ENCODE measurements at regions of chr7 and their contacts with region 1.

Region 1: DNA sequence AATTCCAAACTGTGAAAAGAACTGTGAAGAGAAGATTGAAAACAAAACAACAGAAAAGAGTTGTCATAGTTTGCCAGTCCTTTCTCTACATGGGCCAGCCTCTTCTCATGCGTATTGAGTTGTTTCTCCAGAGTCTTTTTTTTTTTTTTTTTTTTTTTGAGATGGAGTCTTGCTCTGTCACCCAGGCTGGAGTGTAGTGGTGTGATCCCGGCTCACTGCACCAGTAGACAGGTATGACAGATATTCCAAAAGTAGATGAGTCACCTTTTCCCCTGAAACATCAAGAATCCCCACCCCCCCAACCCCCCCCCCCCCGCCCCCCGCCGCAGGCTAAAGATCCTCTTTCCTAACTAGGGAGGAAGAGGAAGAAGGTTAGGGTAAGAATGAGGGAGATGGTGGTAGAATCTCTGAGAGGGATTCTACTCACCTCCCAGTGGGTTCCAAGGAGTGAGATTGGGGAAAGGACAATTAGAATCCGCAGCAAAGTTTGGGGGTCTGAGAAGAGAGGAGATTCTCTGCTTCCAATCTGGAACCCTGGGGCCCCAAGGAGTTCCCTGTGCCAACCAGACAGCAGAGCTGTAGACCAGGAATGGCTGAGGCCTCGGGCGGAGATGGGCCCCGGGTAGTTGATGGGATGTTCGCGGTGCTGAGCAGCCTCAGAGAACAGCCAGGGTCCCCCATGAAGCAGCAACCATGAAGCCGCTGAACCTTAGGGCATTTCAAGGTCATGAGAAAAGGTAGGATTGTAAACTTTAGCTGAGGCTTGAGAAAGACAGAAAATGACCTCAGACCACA is 15.8 kb upstream of the KMT2C start:
- DNase-seq: no peak
- ATAC-seq: no peak
- H3K4me3 ChIP-seq: no peak overlapping the region
- H3K4me3 Mint-ChIP-seq: no peak overlapping the region
- H3K27ac ChIP-seq: no peak overlapping the region
- H3K27ac Mint-ChIP-seq: no peak overlapping the region
- H3K4me1 ChIP-seq: no peaks in the 10 kb centered on the region
- H3K4me1 Mint-ChIP-seq: peaks cover 0 to 4% (median 2%) of the 10 kb centered on the region in 3 donors
- H3K27me3 ChIP-seq: peaks cover 0 to 2% of the 10 kb centered on the region in 2 experiments
- H3K27me3 Mint-ChIP-seq: no peaks in the 10 kb centered on the region

Region 2: GRCh38 chr7:152341039-152341913 is 110.3 kb before region 1 on chr7:
- CTCF ChIA-PET with region 1: no interaction called
- POLR2A ChIA-PET with region 1: no interaction called
- DNase-seq: peak in 1 of 35 experiments; percentile 17
- ATAC-seq: peak in 1 of 4 experiments; percentile 19
- H3K4me3 ChIP-seq: no peak overlapping the region
- H3K4me3 Mint-ChIP-seq: no peak overlapping the region
- H3K27ac ChIP-seq: no peak overlapping the region
- H3K27ac Mint-ChIP-seq: no peak overlapping the region
- H3K4me1 ChIP-seq: peaks cover 9 to 13% of the 10 kb centered on the region in 2 experiments
- H3K4me1 Mint-ChIP-seq: peaks cover 67 to 75% (median 68%) of the 10 kb centered on the region in 3 donors
- H3K27me3 ChIP-seq: no peaks in the 10 kb centered on the region
- H3K27me3 Mint-ChIP-seq: no peaks in the 10 kb centered on the region

Region 3: GRCh38 chr7:152383341-152384234 is 68.0 kb before region 1 on chr7:
- CTCF ChIA-PET with region 1: no interaction called
- POLR2A ChIA-PET with region 1: no interaction called
- DNase-seq: no peak
- ATAC-seq: peak in 1 of 4 experiments; percentile 15
- H3K4me3 ChIP-seq: no peak overlapping the region
- H3K4me3 Mint-ChIP-seq: no peak overlapping the region
- H3K27ac ChIP-seq: no peak overlapping the region
- H3K27ac Mint-ChIP-seq: no peak overlapping the region
- H3K4me1 ChIP-seq: peaks cover 2% of the 10 kb centered on the region in 2 experiments
- H3K4me1 Mint-ChIP-seq: peaks cover 35 to 42% (median 38%) of the 10 kb centered on the region in 3 donors
- H3K27me3 ChIP-seq: no peaks in the 10 kb centered on the region
- H3K27me3 Mint-ChIP-seq: no peaks in the 10 kb centered on the region

Region 4: DNA sequence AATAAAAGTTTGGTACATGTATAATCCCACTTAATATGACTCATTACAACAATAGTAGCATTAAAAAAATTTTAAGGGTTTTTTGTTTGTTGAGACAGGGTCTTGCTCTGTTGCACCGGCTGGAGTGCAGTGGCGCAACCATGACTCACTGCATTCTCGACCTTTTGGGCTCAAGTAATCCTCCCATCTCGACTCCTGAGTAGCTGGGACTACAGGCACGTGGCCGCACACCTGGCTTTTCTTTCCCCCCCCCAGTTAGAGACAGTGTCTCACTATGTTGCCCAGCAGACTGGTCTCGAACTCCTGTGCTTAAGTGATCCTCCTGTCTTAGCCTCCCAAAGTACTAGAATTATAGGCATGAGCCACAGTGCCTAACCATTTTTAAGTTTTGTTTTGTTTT is 56.4 kb before region 1 on chr7:
- CTCF ChIA-PET with region 1: no interaction called
- POLR2A ChIA-PET with region 1: interaction called in 1 of 2 experiments, 11 read pairs
- DNase-seq: no peak
- ATAC-seq: no peak
- H3K4me3 ChIP-seq: no peak overlapping the region
- H3K4me3 Mint-ChIP-seq: no peak overlapping the region
- H3K27ac ChIP-seq: no peak overlapping the region
- H3K27ac Mint-ChIP-seq: no peak overlapping the region
- H3K4me1 ChIP-seq: peaks cover 0 to 15% of the 10 kb centered on the region in 2 experiments
- H3K4me1 Mint-ChIP-seq: peaks cover 74 to 82% (median 80%) of the 10 kb centered on the region in 3 donors
- H3K27me3 ChIP-seq: no peaks in the 10 kb centered on the region
- H3K27me3 Mint-ChIP-seq: no peaks in the 10 kb centered on the region

Region 5: GRCh38 chr7:152463709-152464311 is 12.3 kb after region 1 on chr7:
- CTCF ChIA-PET with region 1: no interaction called
- POLR2A ChIA-PET with region 1: no interaction called
- DNase-seq: peak; percentile 100
- ATAC-seq: peak; percentile 88 to 92 (median 90)
- H3K4me3 ChIP-seq: peak overlapping the region; percentile 87 to 89
- H3K4me3 Mint-ChIP-seq: peak overlapping the region; percentile 88 to 92 (median 91)
- H3K27ac ChIP-seq: peak overlapping the region; percentile 73
- H3K27ac Mint-ChIP-seq: peak overlapping the region; percentile 39 to 91
- H3K4me1 ChIP-seq: peaks cover 6 to 11% of the 10 kb centered on the region in 2 experiments
- H3K4me1 Mint-ChIP-seq: peaks cover 11 to 17% (median 15%) of the 10 kb centered on the region in 3 donors
- H3K27me3 ChIP-seq: no peaks in the 10 kb centered on the region
- H3K27me3 Mint-ChIP-seq: no peaks in the 10 kb centered on the region

Region 6: DNA sequence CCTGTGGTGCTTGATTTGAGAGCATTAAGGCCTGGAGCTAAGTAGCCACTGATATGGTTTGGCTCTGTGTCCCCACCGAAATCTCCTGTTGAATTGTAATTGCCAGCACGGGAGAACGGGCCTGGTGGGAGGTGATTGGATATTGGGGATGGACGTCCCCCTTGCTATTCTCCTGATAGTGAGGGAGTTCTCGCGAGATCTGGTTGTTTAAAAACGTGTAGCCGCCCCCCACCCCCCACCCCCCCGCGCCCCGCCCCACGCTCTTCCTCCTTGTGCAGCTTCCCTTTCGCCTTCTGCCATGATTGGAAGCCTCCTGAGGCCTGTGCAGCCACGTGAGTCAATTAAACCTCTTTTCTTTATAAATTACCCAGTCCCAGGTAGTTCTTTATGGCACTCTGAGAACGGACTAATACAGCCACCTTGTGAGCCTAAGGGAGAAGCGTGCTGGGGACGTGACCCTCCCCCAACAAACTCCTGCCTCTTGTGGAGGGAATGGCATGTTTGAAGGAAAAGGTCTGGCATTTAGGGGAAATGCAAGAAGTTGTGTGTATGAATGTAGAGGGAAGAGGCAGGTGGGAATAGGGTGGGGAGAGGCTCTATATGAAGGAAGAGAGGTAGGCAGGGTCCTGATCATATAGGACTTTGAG is 102.2 kb after region 1 on chr7:
- CTCF ChIA-PET with region 1: no interaction called
- POLR2A ChIA-PET with region 1: no interaction called
- DNase-seq: no peak
- ATAC-seq: no peak
- H3K4me3 ChIP-seq: no peak overlapping the region
- H3K4me3 Mint-ChIP-seq: no peak overlapping the region
- H3K27ac ChIP-seq: no peak overlapping the region
- H3K27ac Mint-ChIP-seq: no peak overlapping the region
- H3K4me1 ChIP-seq: no peaks in the 10 kb centered on the region
- H3K4me1 Mint-ChIP-seq: no peaks in the 10 kb centered on the region
- H3K27me3 ChIP-seq: peaks cover 0 to 3% of the 10 kb centered on the region in 2 experiments
- H3K27me3 Mint-ChIP-seq: no peaks in the 10 kb centered on the region